Endothelial cell of umbilical vein (primary cell): ENCODE measurements at regions of chr20 and their contacts with region 1.

Region 1: DNA sequence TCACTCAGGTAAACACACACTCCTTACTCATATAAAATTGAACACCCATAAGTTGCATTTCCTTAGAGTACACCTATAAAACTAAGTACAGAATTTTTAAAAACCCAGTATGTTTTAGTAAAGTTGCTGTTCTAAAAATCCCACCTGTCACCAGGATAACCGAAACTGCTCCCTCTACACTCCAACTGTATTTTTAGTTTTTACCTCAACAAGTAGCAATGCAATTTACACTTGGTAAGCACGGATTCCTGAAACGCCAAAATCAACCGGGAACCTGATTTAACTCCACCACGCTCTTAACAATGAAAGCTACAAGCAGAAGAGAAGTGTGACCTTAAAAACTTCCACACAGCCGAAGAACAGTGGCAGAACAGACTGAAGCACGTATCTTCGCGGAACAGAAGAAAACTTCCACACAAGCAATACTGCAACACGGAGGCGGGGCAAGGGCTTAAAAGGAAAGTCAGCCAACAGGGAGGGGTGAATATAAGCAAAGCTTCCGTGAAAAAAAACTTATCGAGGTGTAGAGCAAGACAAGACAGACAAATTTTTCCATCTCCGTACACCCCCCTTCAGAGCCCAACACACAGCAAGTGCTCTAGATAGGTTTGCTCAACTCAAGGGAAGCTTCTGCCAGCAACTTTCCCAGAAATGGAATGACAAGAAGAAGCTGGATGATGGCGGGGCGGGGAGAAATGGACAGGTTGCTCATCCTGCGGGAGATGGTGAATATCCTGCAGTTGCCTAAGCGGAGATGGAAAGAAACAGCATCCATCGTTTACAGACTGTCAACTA is 1.4 kb downstream of the STAU1 start:
- DNase-seq: peak; percentile 71
- H3K4me3 ChIP-seq: peak overlapping the region; percentile 83 to 94 (median 90)
- H3K27ac ChIP-seq: no peak overlapping the region
- H3K4me1 ChIP-seq: peaks cover 7% of the 10 kb centered on the region
- H3K27me3 ChIP-seq: peaks cover 0 to 4% of the 10 kb centered on the region in 2 experiments
- CTCF ChIP-seq: no peak
- POLR2A ChIP-seq: peak; percentile 25

Region 2: DNA sequence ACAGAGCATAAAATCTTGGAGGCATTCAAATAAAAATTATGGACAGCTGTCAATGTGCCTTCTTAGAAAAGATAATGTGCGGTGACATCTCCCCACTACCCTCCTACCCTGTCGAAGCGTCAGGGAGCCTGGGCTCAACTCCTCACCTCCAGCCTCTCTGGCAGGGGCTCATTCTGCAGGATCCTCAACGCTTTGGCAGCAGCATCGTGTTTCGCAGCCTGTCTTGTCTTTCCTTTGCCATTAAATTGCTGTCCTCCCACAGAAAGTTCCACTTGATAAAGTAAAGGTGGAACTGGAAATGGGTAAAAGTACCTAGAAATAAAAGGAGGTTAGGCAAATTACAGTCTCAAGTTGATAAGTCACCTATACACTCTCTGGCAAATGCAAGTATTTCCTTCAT is 35.3 kb before region 1 on chr20:
- CTCF ChIA-PET with region 1: no interaction called
- POLR2A ChIA-PET with region 1: no interaction called
- dilution Hi-C with region 1: no loop called
- intact Hi-C with region 1: loop called (anchors 1 kb)
- DNase-seq: no peak
- H3K4me3 ChIP-seq: no peak overlapping the region
- H3K27ac ChIP-seq: no peak overlapping the region
- H3K4me1 ChIP-seq: no peaks in the 10 kb centered on the region
- H3K27me3 ChIP-seq: no peaks in the 10 kb centered on the region
- CTCF ChIP-seq: no peak
- POLR2A ChIP-seq: no peak

Region 3: GRCh38 chr20:49567421-49568334 is 380.9 kb after region 1 on chr20 and contains the start of gene PTGIS:
- CTCF ChIA-PET with region 1: no interaction called
- POLR2A ChIA-PET with region 1: no interaction called
- dilution Hi-C with region 1: no loop called
- intact Hi-C with region 1: no loop called
- DNase-seq: no peak
- H3K4me3 ChIP-seq: peak within 1 kb of the TSS; percentile 29 to 40 (median 36)
- H3K27ac ChIP-seq: no peak within 1 kb of the TSS
- H3K4me1 ChIP-seq: peaks cover 26% of the 10 kb centered on the region
- H3K27me3 ChIP-seq: no peaks in the 10 kb centered on the region
- CTCF ChIP-seq: no peak
- POLR2A ChIP-seq: no peak
- total RNA-seq, gene PTGIS: 4.4 and 6.2 TPM in 2 replicates